Posterior vena cava (tissue), 2 donors: ENCODE measurements at regions of chr12 and their contacts with region 1.

Region 1: DNA sequence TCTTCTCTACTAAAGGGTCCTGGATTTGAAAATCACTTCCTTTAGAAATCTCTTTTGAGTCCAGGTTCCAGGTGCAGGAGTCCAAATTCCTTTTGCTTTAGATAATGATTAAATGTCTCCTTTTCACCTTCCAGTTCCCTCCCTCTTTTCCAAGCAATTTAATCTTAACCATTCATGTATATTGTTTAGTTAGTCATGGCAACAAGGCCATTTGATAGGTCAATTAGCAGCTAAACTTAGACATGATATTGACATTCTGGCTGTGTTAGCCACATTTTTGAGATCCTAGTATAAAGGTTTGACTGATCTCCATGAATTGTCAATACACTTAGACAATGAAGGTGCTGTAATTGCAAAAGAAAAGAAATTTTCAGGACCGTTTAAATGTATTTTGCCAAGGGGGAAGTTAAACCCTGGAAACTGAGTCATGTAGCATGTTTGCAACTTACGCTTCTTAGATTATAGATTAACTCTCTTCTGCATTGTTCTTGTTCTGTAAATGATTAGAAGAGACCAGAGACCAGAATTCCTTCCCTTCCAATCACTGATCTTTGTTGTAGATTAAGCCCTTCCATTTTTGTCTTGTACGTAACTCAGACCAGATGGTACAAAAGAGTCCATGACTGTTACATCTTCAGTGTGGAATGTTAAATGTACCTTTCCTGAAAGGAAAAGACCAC is 12.4 kb upstream of the C12orf75 start:
- DNase-seq: no peak

Region 2: DNA sequence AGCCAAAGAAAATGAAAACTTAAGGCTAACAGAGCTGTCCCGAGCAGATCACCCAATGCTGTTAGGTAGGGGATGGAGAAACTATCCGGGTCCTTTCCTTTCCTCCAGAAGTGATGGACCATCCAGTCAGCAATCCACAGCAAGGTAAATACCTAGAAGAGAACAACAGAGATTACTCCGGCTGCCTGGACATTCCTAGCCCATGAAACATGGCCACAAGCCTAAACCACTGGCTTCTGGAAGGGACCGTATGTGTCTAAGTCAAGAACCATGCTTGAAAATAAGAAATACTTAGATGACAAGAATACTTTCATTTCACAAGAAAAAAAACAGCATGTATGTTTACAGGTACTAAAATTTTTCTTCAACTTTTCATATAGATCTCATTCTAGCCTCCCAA is 512.9 kb before region 1 on chr12:
- intact Hi-C with region 1: loop called in 1 of 2 experiments (anchors 5 kb)
- DNase-seq: no peak

Region 3: GRCh38 chr12:105278043-105278697 is 39.9 kb before region 1 on chr12:
- intact Hi-C with region 1: no loop called
- DNase-seq: no peak

Region 4: DNA sequence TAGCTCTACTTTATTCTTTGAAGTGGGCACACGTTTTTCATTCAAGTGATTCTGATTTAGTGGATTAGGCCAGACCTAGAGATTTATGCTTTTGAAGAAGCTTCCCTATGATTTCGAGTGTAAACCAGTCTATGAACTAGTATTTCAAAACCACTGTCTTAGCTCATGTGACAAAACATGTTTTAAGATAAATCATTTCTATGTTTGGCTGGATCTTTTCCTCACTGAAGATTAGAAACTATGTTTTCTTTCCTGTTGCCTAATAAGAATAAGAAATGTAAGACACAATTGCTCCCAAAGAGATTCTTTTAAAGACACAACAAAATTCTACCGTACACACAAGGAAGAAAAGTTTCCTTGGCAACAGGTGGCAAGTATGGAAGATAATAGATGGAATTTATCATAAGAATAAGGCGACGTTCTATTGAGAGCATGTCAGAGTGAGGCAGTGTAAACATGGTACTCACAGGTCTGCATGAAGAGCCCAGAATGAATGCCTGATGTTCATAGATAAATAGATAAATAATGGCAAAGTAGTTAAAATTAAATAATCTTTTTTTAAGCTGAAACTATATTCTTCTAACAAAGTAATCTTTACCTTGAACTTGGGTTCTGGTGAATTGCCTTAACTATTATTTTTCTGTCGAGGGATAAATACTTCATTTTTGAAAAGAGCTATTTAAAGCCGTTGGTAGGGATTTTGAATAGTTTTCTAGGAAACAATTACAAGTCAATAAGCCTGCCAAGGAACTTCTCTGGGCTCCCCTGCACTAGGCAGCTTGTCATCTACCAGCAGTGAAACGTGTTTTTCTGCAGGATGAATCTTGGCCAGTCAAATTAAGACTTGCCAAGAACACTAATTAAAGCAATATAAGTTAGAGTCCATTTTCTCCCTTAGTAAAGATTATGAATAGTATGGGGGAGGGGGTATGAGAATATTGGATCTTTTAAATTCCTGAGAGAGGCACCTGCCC is 21.7 kb before region 1 on chr12:
- intact Hi-C with region 1: no loop called
- DNase-seq: no peak

Region 5: GRCh38 chr12:105357162-105357691 is 39.1 kb after region 1 on chr12:
- intact Hi-C with region 1: loop called in 1 of 2 experiments (anchors 5 kb)
- DNase-seq: no peak